ENCODE measurements at regions of chr11 and their contacts with region 1.

Region 1: GRCh38 chr11:73982969-73983740 is 512 bp upstream of the UCP2 start:
- DNase-seq: peak; percentile 100
- H3K4me3 ChIP-seq: peak overlapping the region; percentile 55
- H3K4me3 Mint-ChIP-seq: peak overlapping the region; percentile 91
- H3K27ac Mint-ChIP-seq: peak overlapping the region; percentile 95
- H3K4me1 ChIP-seq: peaks cover 15% of the 10 kb centered on the region
- H3K4me1 Mint-ChIP-seq: peaks cover 7% of the 10 kb centered on the region
- H3K27me3 ChIP-seq: no peaks in the 10 kb centered on the region
- H3K27me3 Mint-ChIP-seq: no peaks in the 10 kb centered on the region
- CTCF ChIP-seq: no peak

Region 2: GRCh38 chr11:73542175-73542574 is 441.0 kb before region 1 on chr11:
- CTCF ChIA-PET with region 1: no interaction called
- POLR2A ChIA-PET with region 1: no interaction called
- intact Hi-C with region 1: no loop called
- DNase-seq: no peak
- H3K4me3 ChIP-seq: no peak overlapping the region
- H3K4me3 Mint-ChIP-seq: no peak overlapping the region
- H3K27ac Mint-ChIP-seq: no peak overlapping the region
- H3K4me1 ChIP-seq: no peaks in the 10 kb centered on the region
- H3K4me1 Mint-ChIP-seq: no peaks in the 10 kb centered on the region
- H3K27me3 ChIP-seq: no peaks in the 10 kb centered on the region
- H3K27me3 Mint-ChIP-seq: no peaks in the 10 kb centered on the region
- CTCF ChIP-seq: no peak

Region 3: DNA sequence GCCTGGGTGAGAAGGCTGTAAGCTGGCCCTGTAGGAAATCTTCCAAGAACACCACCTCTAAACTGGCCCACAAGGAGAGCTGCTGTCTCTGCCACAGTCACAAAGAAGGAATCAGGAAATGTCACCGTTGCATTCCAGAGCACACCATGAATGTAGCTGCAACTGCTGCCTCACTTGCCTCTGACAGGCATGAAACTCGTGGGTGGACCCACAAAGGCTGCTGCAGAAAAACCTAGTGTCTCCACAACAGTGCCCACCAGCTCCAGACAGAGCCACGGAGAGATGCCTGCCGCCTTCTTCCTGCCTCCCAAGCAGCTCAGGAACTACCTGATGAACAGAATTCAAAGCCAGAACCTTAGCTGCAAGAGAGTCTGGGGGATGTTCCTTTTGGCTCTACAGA is 21.8 kb before region 1 on chr11:
- CTCF ChIA-PET with region 1: interaction called, 3 read pairs
- POLR2A ChIA-PET with region 1: interaction called, 6 read pairs
- intact Hi-C with region 1: loop called (anchors 1 kb)
- DNase-seq: peak in 1 of 2 experiments; percentile 32
- H3K4me3 ChIP-seq: no peak overlapping the region
- H3K4me3 Mint-ChIP-seq: no peak overlapping the region
- H3K27ac Mint-ChIP-seq: no peak overlapping the region
- H3K4me1 ChIP-seq: no peaks in the 10 kb centered on the region
- H3K4me1 Mint-ChIP-seq: peaks cover 1% of the 10 kb centered on the region
- H3K27me3 ChIP-seq: no peaks in the 10 kb centered on the region; the same call in 1 of the 2 replicates
- H3K27me3 Mint-ChIP-seq: no peaks in the 10 kb centered on the region
- CTCF ChIP-seq: no peak

Region 4: GRCh38 chr11:73972620-73973449 is 10.3 kb before region 1 on chr11:
- CTCF ChIA-PET with region 1: interaction called, 3 read pairs
- POLR2A ChIA-PET with region 1: interaction called, 13 read pairs
- intact Hi-C with region 1: no loop called
- DNase-seq: peak in 1 of 2 experiments; percentile 35
- H3K4me3 ChIP-seq: no peak overlapping the region
- H3K4me3 Mint-ChIP-seq: no peak overlapping the region
- H3K27ac Mint-ChIP-seq: peak overlapping the region; percentile 19
- H3K4me1 ChIP-seq: no peaks in the 10 kb centered on the region
- H3K4me1 Mint-ChIP-seq: no peaks in the 10 kb centered on the region
- H3K27me3 ChIP-seq: no peaks in the 10 kb centered on the region
- H3K27me3 Mint-ChIP-seq: no peaks in the 10 kb centered on the region
- CTCF ChIP-seq: no peak

Region 5: GRCh38 chr11:74069147-74070047 is 86.2 kb after region 1 on chr11:
- CTCF ChIA-PET with region 1: no interaction called
- POLR2A ChIA-PET with region 1: interaction called, 6 read pairs
- intact Hi-C with region 1: loop called (anchors 2 kb)
- DNase-seq: peak; percentile 53 to 76
- H3K4me3 ChIP-seq: no peak overlapping the region
- H3K4me3 Mint-ChIP-seq: no peak overlapping the region
- H3K27ac Mint-ChIP-seq: no peak overlapping the region
- H3K4me1 ChIP-seq: peaks cover 50% of the 10 kb centered on the region
- H3K4me1 Mint-ChIP-seq: peaks cover 46% of the 10 kb centered on the region
- H3K27me3 ChIP-seq: no peaks in the 10 kb centered on the region
- H3K27me3 Mint-ChIP-seq: no peaks in the 10 kb centered on the region
- CTCF ChIP-seq: no peak

Region 6: GRCh38 chr11:74090701-74091100 is 107.5 kb after region 1 on chr11:
- CTCF ChIA-PET with region 1: no interaction called
- POLR2A ChIA-PET with region 1: interaction called, 7 read pairs
- intact Hi-C with region 1: loop called (anchors 2 kb)
- DNase-seq: peak; percentile 62
- H3K4me3 ChIP-seq: no peak overlapping the region
- H3K4me3 Mint-ChIP-seq: no peak overlapping the region
- H3K27ac Mint-ChIP-seq: no peak overlapping the region
- H3K4me1 ChIP-seq: peaks cover 5% of the 10 kb centered on the region
- H3K4me1 Mint-ChIP-seq: peaks cover 4% of the 10 kb centered on the region
- H3K27me3 ChIP-seq: no peaks in the 10 kb centered on the region
- H3K27me3 Mint-ChIP-seq: no peaks in the 10 kb centered on the region
- CTCF ChIP-seq: peak; percentile 54 to 90

Region 7: DNA sequence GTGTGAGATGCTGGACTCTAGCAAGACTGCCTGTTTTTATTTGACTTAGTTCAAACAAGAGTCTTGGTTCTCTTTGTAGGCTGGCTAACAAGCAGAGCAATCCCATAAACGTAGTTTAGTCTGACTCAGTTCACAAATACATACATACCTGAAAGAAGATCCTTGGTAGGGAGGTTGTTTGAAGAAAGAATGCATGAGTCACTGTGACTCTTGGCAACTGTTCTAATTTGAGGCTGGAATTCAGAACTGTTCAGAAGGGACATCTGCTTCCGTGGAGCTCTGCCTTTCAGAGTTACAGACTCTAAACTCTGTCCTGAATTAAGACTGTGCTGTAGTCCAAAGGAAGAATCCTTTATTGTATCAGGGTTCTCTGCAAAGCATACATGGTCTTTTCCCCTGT is 155.4 kb after region 1 on chr11:
- CTCF ChIA-PET with region 1: no interaction called
- POLR2A ChIA-PET with region 1: interaction called, 4 read pairs
- intact Hi-C with region 1: loop called (anchors 2 kb)
- DNase-seq: peak; percentile 75 to 82
- H3K4me3 ChIP-seq: no peak overlapping the region
- H3K4me3 Mint-ChIP-seq: peak overlapping the region; percentile 62
- H3K27ac Mint-ChIP-seq: peak overlapping the region; percentile 95
- H3K4me1 ChIP-seq: peaks cover 67% of the 10 kb centered on the region
- H3K4me1 Mint-ChIP-seq: peaks cover 60% of the 10 kb centered on the region
- H3K27me3 ChIP-seq: no peaks in the 10 kb centered on the region
- H3K27me3 Mint-ChIP-seq: no peaks in the 10 kb centered on the region
- CTCF ChIP-seq: no peak

Region 8: GRCh38 chr11:74311352-74311926 is 328.3 kb after region 1 on chr11 and contains the start of gene P4HA3:
- CTCF ChIA-PET with region 1: no interaction called
- POLR2A ChIA-PET with region 1: no interaction called
- intact Hi-C with region 1: loop called (anchors 10 kb)
- DNase-seq: peak; percentile 86 to 90
- H3K4me3 ChIP-seq: peak within 1 kb of the TSS; percentile 32
- H3K4me3 Mint-ChIP-seq: peak within 1 kb of the TSS; percentile 79
- H3K27ac Mint-ChIP-seq: no peak within 1 kb of the TSS
- H3K4me1 ChIP-seq: peaks cover 6% of the 10 kb centered on the region; the same call in 1 of the 2 replicates
- H3K4me1 Mint-ChIP-seq: peaks cover 5% of the 10 kb centered on the region
- H3K27me3 ChIP-seq: no peaks in the 10 kb centered on the region; the same call in 1 of the 2 replicates
- H3K27me3 Mint-ChIP-seq: peaks cover 19% of the 10 kb centered on the region
- CTCF ChIP-seq: peak in 1 of 2 experiments; percentile 13
- total RNA-seq, gene P4HA3: 0.42 TPM in 1 of 2 replicates, not detected in the other

Measured in Caco-2 (cell line).